MCF 10A (cell line): ENCODE measurements at regions of chr16 and their contacts with region 1.

Region 1: GRCh38 chr16:74633686-74634085 is 26.8 kb upstream of the GLG1 start:
- DNase-seq: no peak
- H3K4me3 Mint-ChIP-seq: no peak overlapping the region
- H3K27ac Mint-ChIP-seq: peak overlapping the region; percentile 49
- H3K4me1 Mint-ChIP-seq: no peaks in the 10 kb centered on the region
- H3K27me3 Mint-ChIP-seq: no peaks in the 10 kb centered on the region
- CTCF ChIP-seq: no peak

Region 2: GRCh38 chr16:74577882-74578366 is 55.8 kb before region 1 on chr16:
- CTCF ChIA-PET with region 1: no interaction called
- POLR2A ChIA-PET with region 1: no interaction called
- intact Hi-C with region 1: no loop called
- DNase-seq: peak; percentile 52
- H3K4me3 Mint-ChIP-seq: no peak overlapping the region
- H3K27ac Mint-ChIP-seq: peak overlapping the region; percentile 25
- H3K4me1 Mint-ChIP-seq: peaks cover 15% of the 10 kb centered on the region
- H3K27me3 Mint-ChIP-seq: no peaks in the 10 kb centered on the region
- CTCF ChIP-seq: no peak

Region 3: DNA sequence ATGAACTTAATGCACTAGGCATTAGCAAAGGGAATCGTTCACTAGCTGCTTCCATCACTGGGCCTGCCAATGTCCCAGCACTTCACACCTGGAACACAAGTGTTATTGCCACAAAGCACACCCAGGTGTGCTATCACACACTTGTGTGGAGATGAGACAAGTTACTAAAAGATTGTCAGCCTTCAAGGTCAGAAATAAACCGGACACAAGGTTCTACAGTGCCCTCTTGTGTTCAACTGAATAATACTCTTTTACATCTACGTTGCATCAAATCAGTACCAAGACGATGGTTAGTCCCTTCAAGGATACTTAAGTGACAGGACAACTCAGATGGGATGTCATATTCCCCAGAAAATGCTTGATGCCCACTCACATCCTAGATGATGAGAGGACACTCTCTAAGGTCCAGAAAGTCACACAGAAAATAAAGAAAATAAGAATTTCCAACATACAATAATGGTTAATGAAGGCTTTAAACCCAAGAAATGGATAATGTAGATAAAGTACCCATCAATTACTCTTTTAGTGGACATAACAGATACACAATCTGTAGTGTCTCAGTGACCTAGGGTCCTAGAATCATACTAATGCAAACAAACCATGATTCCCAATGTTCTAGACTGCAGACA is 10.4 kb before region 1 on chr16:
- CTCF ChIA-PET with region 1: interaction called, 31 read pairs
- POLR2A ChIA-PET with region 1: interaction called, 3 read pairs
- intact Hi-C with region 1: no loop called
- DNase-seq: peak; percentile 60
- H3K4me3 Mint-ChIP-seq: no peak overlapping the region
- H3K27ac Mint-ChIP-seq: no peak overlapping the region
- H3K4me1 Mint-ChIP-seq: peaks cover 4% of the 10 kb centered on the region
- H3K27me3 Mint-ChIP-seq: no peaks in the 10 kb centered on the region
- CTCF ChIP-seq: peak; percentile 65

Region 4: GRCh38 chr16:74650966-74651567 is 17.4 kb after region 1 on chr16:
- CTCF ChIA-PET with region 1: interaction called, 10 read pairs
- POLR2A ChIA-PET with region 1: interaction called, 3 read pairs
- intact Hi-C with region 1: no loop called
- DNase-seq: peak; percentile 8
- H3K4me3 Mint-ChIP-seq: no peak overlapping the region
- H3K27ac Mint-ChIP-seq: no peak overlapping the region
- H3K4me1 Mint-ChIP-seq: peaks cover 24% of the 10 kb centered on the region
- H3K27me3 Mint-ChIP-seq: no peaks in the 10 kb centered on the region
- CTCF ChIP-seq: peak; percentile 55